Naive thymus-derived CD8-positive, alpha-beta T cell (primary cell): ENCODE measurements at regions of chr3 and their contacts with region 1.

Region 1: GRCh38 chr3:36876181-36876936 is 68.5 kb downstream of the TRANK1 start:
- DNase-seq: peak in 5 of 10 donors; percentile 9 to 72 (median 61)
- ATAC-seq: peak; percentile 87 to 91
- H3K4me3 Mint-ChIP-seq: peak overlapping the region; percentile 69 to 85 (median 76)
- H3K27ac Mint-ChIP-seq: peak overlapping the region; percentile 90 to 98 (median 95)
- H3K4me1 Mint-ChIP-seq: peaks cover 25 to 61% (median 50%) of the 10 kb centered on the region in 4 donors
- H3K27me3 Mint-ChIP-seq: no peaks in the 10 kb centered on the region

Region 2: DNA sequence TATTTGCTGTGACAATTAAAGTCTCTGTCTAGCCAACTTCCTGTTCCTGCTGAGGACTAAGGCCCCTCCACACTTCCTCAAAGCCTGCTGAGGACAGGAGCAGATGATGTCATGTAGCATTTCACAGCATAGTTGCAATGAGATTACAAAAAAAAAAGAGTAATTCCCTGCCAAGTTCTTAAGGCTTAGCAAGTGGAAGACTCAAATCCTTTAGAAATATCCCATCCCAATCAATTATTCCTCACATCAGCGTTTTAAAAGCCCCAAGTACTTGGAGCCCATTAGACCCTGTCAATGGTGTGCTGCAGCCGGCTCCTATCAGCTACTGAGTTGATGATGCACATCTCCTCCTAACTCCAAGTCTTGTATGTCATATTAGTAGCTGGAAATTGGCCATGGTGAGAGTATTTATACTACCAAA is 16.8 kb after region 1 on chr3:
- POLR2A ChIA-PET with region 1: interaction called, 17 read pairs
- DNase-seq: peak in 4 of 10 donors; percentile 22 to 44 (median 32)
- ATAC-seq: peak; percentile 87 to 92
- H3K4me3 Mint-ChIP-seq: peak overlapping the region in 8 of 10 donors; percentile 8 to 52 (median 30)
- H3K27ac Mint-ChIP-seq: peak overlapping the region; percentile 57 to 94 (median 90)
- H3K4me1 Mint-ChIP-seq: peaks cover 28 to 87% (median 56%) of the 10 kb centered on the region in 4 donors
- H3K27me3 Mint-ChIP-seq: no peaks in the 10 kb centered on the region

Region 3: GRCh38 chr3:36944012-36944640 is 67.8 kb after region 1 on chr3:
- POLR2A ChIA-PET with region 1: interaction called, 12 read pairs
- DNase-seq: peak; percentile 7 to 64 (median 24)
- ATAC-seq: peak; percentile 43 to 50
- H3K4me3 Mint-ChIP-seq: peak overlapping the region; percentile 77 to 91 (median 82)
- H3K27ac Mint-ChIP-seq: peak overlapping the region in 9 of 10 donors; percentile 17 to 92 (median 85)
- H3K4me1 Mint-ChIP-seq: peaks cover 4 to 25% (median 18%) of the 10 kb centered on the region in 4 donors
- H3K27me3 Mint-ChIP-seq: no peaks in the 10 kb centered on the region